Cardiac septum (tissue), 1 donor: ENCODE measurements at regions of chr2 and their contacts with region 1.

Region 1: DNA sequence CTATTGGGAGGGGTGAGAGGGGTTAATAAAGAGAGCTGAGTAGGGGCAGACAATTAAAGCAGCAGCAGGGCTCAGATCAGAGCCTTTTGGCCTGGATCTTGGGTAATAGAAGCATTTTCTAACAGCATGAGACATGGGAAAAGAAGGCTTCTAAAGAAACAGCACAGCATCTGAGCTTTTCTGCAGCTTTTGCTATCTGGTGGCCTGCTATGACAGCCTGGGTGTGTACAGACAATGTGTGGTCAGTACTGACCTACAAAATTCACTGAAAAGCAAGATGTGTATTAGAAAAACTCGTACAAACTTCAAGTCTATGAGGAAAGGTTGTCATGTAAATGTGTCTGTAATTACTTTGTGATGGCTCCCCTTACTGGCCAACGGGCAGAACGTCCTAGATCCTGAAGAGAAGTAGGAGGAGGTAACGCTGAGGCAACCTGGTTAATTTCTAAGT is 95.6 kb downstream of the GALNT3 start:
- DNase-seq: no peak

Region 2: GRCh38 chr2:165587335-165587938 is 111.0 kb before region 1 on chr2:
- intact Hi-C with region 1: loop called (anchors 10 kb)
- DNase-seq: no peak